ENCODE measurements at regions of chr3 and their contacts with region 1.

Region 1: GRCh38 chr3:32667122-32667521 is 17.9 kb upstream of the CNOT10 start:
- DNase-seq: no peak
- H3K4me3 ChIP-seq: no peak overlapping the region
- H3K27ac ChIP-seq: no peak overlapping the region
- H3K4me1 ChIP-seq: no peaks in the 10 kb centered on the region
- H3K27me3 ChIP-seq: no peaks in the 10 kb centered on the region
- CTCF ChIP-seq: no peak

Region 2: DNA sequence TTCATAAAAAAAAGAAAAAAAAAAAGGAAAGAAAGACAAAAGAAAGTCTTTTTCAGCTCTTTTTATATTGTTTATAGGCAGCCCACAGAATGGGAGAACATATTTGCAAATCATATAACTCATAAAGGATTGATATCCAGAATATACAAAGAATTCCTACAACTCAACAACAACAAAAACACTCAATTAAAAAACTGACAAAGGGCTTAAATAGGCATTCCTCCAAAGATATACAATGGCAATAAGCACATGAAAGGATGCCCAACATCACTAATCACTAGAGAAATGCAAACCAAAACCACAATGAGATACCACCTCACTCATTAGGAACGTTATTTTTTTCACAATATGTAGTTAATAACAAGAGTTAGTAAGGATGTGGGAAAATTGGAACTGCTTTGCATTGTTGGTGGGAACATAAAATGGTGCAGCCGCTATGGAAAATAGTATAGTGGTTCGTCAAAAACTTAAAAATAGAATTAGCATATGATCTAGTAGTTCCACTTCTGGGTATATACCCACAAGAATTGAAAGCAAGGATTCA is 482.9 kb before region 1 on chr3:
- CTCF ChIA-PET with region 1: interaction called, 12 read pairs
- POLR2A ChIA-PET with region 1: no interaction called
- intact Hi-C with region 1: no loop called
- DNase-seq: no peak
- H3K4me3 ChIP-seq: no peak overlapping the region
- H3K27ac ChIP-seq: no peak overlapping the region
- H3K4me1 ChIP-seq: no peaks in the 10 kb centered on the region
- H3K27me3 ChIP-seq: no peaks in the 10 kb centered on the region
- CTCF ChIP-seq: no peak

Region 3: GRCh38 chr3:32374788-32375595 is 292.1 kb before region 1 on chr3:
- CTCF ChIA-PET with region 1: no interaction called
- POLR2A ChIA-PET with region 1: no interaction called
- intact Hi-C with region 1: loop called (anchors 10 kb)
- DNase-seq: peak in 1 of 2 experiments; percentile 44
- H3K4me3 ChIP-seq: no peak overlapping the region
- H3K27ac ChIP-seq: no peak overlapping the region
- H3K4me1 ChIP-seq: no peaks in the 10 kb centered on the region
- H3K27me3 ChIP-seq: no peaks in the 10 kb centered on the region
- CTCF ChIP-seq: peak; percentile 67

Region 4: GRCh38 chr3:32493437-32494414 is 173.4 kb before region 1 on chr3:
- CTCF ChIA-PET with region 1: interaction called, 10 read pairs
- POLR2A ChIA-PET with region 1: no interaction called
- intact Hi-C with region 1: no loop called
- DNase-seq: no peak
- H3K4me3 ChIP-seq: no peak overlapping the region
- H3K27ac ChIP-seq: no peak overlapping the region
- H3K4me1 ChIP-seq: peaks cover 17% of the 10 kb centered on the region
- H3K27me3 ChIP-seq: no peaks in the 10 kb centered on the region
- CTCF ChIP-seq: no peak

Region 5: GRCh38 chr3:32510075-32510724 is 156.9 kb before region 1 on chr3:
- CTCF ChIA-PET with region 1: no interaction called
- POLR2A ChIA-PET with region 1: no interaction called
- intact Hi-C with region 1: loop called (anchors 1 kb)
- DNase-seq: peak in 1 of 2 experiments; percentile 51
- H3K4me3 ChIP-seq: no peak overlapping the region
- H3K27ac ChIP-seq: no peak overlapping the region
- H3K4me1 ChIP-seq: no peaks in the 10 kb centered on the region
- H3K27me3 ChIP-seq: no peaks in the 10 kb centered on the region
- CTCF ChIP-seq: peak; percentile 73